ENCODE measurements at regions of chr17 and their contacts with region 1.

Region 1: DNA sequence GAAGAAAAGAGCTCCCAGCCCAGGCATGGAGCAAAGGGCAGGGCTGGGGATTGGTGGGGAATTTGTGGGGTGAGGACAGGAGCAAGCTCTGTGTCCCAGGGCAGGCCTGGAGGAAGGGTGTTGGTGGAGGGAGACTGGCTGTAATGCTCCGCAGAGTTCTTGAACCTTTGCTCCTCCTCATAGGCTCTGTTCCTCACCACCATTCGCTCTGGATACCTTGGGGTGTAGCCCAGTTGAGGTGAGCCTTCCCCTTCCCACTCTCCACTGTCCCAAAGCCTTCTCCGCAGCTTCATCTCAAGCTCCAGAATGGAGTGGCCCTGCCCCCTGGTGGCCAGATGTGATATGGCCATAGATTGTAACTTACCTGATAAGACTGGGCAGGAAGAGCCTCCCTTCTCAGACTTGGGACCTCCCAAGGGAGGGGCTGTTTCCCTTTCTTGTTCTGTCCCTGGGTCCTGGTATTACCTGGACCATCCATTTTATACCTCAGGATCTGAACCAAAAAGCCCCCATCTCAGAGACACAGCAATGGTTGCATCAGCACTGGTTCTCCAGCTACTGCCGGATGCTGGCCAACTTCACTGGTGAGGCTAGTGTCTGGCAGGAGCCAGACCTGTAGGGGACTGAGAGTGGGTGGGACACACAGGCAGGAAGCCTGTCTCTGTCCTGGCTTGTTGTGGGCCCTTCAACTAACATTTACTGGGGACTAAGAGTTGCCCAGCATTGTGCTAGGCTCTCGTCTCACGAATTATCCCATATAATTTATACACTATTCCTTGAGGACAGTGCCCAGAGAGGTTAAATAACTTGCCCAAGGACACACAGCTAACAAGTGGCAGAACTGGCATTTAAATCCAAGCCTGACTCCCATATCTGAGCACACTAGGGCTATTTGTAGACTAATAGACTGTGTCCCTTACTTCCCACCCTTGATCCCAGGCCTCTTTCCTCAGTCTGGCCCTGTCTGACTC is 19.1 kb upstream of the STAC2 start:
- DNase-seq: peak; percentile 89
- H3K4me3 Mint-ChIP-seq: no peak overlapping the region
- H3K27ac Mint-ChIP-seq: no peak overlapping the region
- H3K4me1 Mint-ChIP-seq: peaks cover 15% of the 10 kb centered on the region
- H3K27me3 Mint-ChIP-seq: no peaks in the 10 kb centered on the region

Region 2: GRCh38 chr17:39209317-39210092 is 35.4 kb before region 1 on chr17:
- CTCF ChIA-PET with region 1: interaction called, 208 read pairs
- POLR2A ChIA-PET with region 1: interaction called, 9 read pairs
- DNase-seq: peak; percentile 65
- H3K4me3 Mint-ChIP-seq: peak overlapping the region; percentile 4
- H3K27ac Mint-ChIP-seq: no peak overlapping the region
- H3K4me1 Mint-ChIP-seq: peaks cover 18% of the 10 kb centered on the region
- H3K27me3 Mint-ChIP-seq: peaks cover 17% of the 10 kb centered on the region

Region 3: GRCh38 chr17:39270923-39271322 is 26.0 kb after region 1 on chr17:
- CTCF ChIA-PET with region 1: interaction called, 11 read pairs
- POLR2A ChIA-PET with region 1: no interaction called
- DNase-seq: no peak
- H3K4me3 Mint-ChIP-seq: no peak overlapping the region
- H3K27ac Mint-ChIP-seq: no peak overlapping the region
- H3K4me1 Mint-ChIP-seq: no peaks in the 10 kb centered on the region
- H3K27me3 Mint-ChIP-seq: no peaks in the 10 kb centered on the region